HEK293 (cell line): ENCODE measurements at regions of chr9 and their contacts with region 1.

Region 1: GRCh38 chr9:89602978-89603766 is 1.6 kb upstream of the GADD45G start:
- H3K4me3 ChIP-seq: peak overlapping the region; percentile 41
- H3K27ac ChIP-seq: peak overlapping the region; percentile 74; the same call in 1 of the 2 replicates
- H3K4me1 ChIP-seq: peaks cover 4% of the 10 kb centered on the region; the same call in 1 of the 2 replicates
- CTCF ChIP-seq: peak; percentile 53

Region 2: DNA sequence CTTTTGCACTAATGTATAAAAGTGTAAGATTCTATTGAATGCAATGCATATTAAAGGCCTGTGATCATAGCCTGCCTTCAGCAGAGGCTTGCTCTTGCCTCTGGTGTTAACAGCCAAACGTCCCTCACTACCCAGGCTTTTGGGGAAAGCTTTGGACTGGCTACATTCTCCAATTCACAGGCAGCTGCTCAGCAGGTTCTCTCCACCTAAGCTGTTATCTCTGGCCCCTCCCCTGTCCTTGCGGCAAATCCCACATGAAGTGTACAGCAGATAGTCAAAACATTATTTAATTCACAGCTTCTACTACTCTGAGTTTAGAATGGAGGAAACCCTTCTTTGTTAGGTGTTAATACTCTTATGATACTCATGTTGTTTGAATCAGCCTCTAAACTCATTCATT is 44.2 kb before region 1 on chr9:
- CTCF ChIA-PET with region 1: no interaction called
- POLR2A ChIA-PET with region 1: no interaction called
- H3K4me3 ChIP-seq: no peak overlapping the region
- H3K27ac ChIP-seq: no peak overlapping the region
- H3K4me1 ChIP-seq: no peaks in the 10 kb centered on the region
- CTCF ChIP-seq: no peak

Region 3: GRCh38 chr9:89661956-89662717 is 59.0 kb after region 1 on chr9:
- CTCF ChIA-PET with region 1: interaction called, 3 read pairs
- POLR2A ChIA-PET with region 1: interaction called, 15 read pairs
- H3K4me3 ChIP-seq: peak overlapping the region; percentile 2; the same call in 1 of the 2 replicates
- H3K27ac ChIP-seq: peak overlapping the region; percentile 19; the same call in 1 of the 2 replicates
- H3K4me1 ChIP-seq: no peaks in the 10 kb centered on the region
- CTCF ChIP-seq: no peak

Region 4: DNA sequence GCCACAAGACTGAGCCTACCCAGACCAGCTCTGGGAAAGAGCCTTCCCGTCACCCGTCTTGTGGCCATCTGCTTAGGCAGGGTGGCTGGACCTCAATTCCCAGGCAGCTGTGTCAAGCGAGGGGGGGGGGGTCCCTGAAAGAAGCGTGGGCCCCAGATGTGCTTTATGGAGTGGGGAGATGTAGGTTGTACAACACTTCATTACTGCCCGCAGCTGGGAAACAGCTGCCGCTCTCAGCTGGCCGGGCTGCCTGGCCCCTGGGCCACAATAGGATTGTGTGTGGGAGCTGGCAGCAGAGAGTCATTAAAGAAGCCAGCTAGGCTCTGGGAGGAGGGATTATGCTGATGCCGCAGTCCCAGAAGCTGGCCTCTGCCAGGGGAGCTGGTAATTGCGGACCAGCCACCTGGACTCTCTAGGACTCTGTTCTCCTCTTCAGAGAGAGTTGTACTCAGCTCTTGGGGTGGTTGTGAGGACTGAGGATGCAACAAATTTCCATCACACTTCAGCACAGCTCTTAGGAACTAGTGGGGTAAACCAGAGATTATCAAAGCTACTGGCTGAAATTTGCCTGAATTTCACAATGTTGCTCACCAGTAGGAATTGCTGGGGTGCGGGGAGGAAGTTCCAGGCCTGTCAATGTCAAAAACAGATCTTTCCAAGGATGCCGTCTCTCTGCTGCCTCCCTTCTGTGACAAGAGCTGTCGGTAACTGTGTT is 147.1 kb after region 1 on chr9:
- CTCF ChIA-PET with region 1: interaction called, 6 read pairs
- POLR2A ChIA-PET with region 1: interaction called, 14 read pairs
- H3K4me3 ChIP-seq: no peak overlapping the region
- H3K27ac ChIP-seq: no peak overlapping the region
- H3K4me1 ChIP-seq: no peaks in the 10 kb centered on the region; the same call in 1 of the 2 replicates
- CTCF ChIP-seq: no peak

Region 5: GRCh38 chr9:89919169-89919681 is 316.1 kb after region 1 on chr9:
- CTCF ChIA-PET with region 1: interaction called, 16 read pairs
- POLR2A ChIA-PET with region 1: interaction called, 8 read pairs
- H3K4me3 ChIP-seq: no peak overlapping the region
- H3K27ac ChIP-seq: no peak overlapping the region
- H3K4me1 ChIP-seq: no peaks in the 10 kb centered on the region
- CTCF ChIP-seq: no peak

Region 6: DNA sequence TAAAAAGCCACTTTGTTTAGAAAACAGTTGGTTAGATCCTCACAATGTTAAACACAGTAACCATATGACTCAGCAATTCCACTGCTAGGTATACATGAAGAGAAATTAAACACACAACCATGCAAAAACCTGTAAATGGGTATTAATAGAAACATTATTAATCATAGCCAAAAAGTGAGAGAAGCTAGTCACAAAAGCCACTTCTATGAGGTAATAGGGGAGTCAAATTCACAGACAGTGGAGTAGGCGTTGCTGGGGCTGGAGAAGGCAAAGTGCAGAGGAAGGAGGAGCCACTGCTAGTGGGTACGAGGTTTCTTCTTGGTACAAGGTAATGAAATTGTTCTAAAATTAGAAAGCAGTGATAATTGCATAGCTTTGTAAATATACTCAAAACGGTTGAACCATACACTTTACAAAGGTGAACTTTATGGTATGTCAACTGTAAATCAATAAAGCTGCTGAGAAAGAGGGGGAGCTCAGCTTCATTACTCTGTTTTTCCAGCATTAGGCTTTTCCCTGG is 366.0 kb after region 1 on chr9:
- CTCF ChIA-PET with region 1: interaction called, 11 read pairs
- POLR2A ChIA-PET with region 1: interaction called, 5 read pairs
- H3K4me3 ChIP-seq: no peak overlapping the region
- H3K27ac ChIP-seq: no peak overlapping the region
- H3K4me1 ChIP-seq: no peaks in the 10 kb centered on the region
- CTCF ChIP-seq: no peak

Region 7: GRCh38 chr9:90102292-90102901 is 499.2 kb after region 1 on chr9:
- CTCF ChIA-PET with region 1: interaction called, 234 read pairs
- POLR2A ChIA-PET with region 1: interaction called, 45 read pairs
- H3K4me3 ChIP-seq: no peak overlapping the region
- H3K27ac ChIP-seq: no peak overlapping the region
- H3K4me1 ChIP-seq: no peaks in the 10 kb centered on the region; the same call in 1 of the 2 replicates
- CTCF ChIP-seq: peak; percentile 22; the same call in 1 of the 2 replicates